PC-9 (cell line): ENCODE measurements at regions of chr3 and their contacts with region 1.

Region 1: GRCh38 chr3:128725932-128726690 is at the start of gene RAB7A:
- DNase-seq: peak; percentile 88 to 97
- H3K4me3 ChIP-seq: peak within 1 kb of the TSS; percentile 99
- H3K27ac ChIP-seq: peak within 1 kb of the TSS; percentile 73
- H3K4me1 ChIP-seq: peaks cover 31% of the 10 kb centered on the region
- H3K27me3 ChIP-seq: no peaks in the 10 kb centered on the region
- CTCF ChIP-seq: no peak
- total RNA-seq, gene RAB7A: 197 and 319 TPM in 2 replicates

Region 2: DNA sequence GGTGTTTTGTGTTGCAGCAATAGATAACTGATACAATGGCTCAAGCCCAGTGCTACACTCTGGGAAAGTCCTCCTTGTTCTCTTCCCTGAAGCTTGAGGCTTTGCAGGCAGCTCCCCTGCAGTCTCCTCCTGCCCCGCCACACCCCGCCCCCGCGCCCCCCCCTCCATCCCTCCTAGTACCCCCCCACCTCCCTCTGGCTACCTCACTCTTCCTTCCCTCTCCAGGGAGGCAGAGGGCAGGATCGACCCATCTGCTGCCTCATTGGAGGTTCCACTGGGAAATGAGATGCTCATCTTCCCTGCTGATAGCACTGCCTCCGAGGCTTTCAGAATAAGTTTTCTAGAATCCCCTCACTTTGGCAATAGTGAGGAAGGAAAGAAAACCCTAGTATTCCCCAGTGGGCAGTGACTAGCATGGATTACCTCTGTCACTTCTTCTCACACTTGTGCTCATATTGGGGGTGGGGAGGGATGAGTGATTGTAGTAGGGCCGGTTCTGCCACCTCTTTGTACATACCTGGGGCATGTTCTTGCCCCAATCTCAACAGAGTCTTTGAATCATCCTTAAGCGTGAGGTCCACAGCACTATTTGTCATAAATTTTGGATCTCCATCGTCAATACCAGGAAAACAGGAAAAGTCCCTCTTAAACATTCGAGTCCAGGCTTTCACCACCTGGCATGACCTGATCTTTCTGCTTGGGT is 16.5 kb before region 1 on chr3:
- CTCF ChIA-PET with region 1: no interaction called
- POLR2A ChIA-PET with region 1: no interaction called
- intact Hi-C with region 1: loop called (anchors 2 kb)
- DNase-seq: peak; percentile 73 to 89
- H3K4me3 ChIP-seq: peak overlapping the region; percentile 38; the same call in 1 of the 2 replicates
- H3K27ac ChIP-seq: peak overlapping the region; percentile 53
- H3K4me1 ChIP-seq: peaks cover 40% of the 10 kb centered on the region
- H3K27me3 ChIP-seq: no peaks in the 10 kb centered on the region
- CTCF ChIP-seq: no peak

Region 3: GRCh38 chr3:128787256-128788240 is 61.4 kb after region 1 on chr3:
- CTCF ChIA-PET with region 1: no interaction called
- POLR2A ChIA-PET with region 1: interaction called, 11 read pairs
- intact Hi-C with region 1: no loop called
- DNase-seq: peak; percentile 58 to 70
- H3K4me3 ChIP-seq: no peak overlapping the region
- H3K27ac ChIP-seq: peak overlapping the region; percentile 42
- H3K4me1 ChIP-seq: peaks cover 24% of the 10 kb centered on the region
- H3K27me3 ChIP-seq: no peaks in the 10 kb centered on the region
- CTCF ChIP-seq: peak; percentile 66